Activated naive CD8-positive, alpha-beta T cell treated with anti-CD3 and anti-CD28 coated beads, Interleukin-2, amount 10 ng/mL, durations not matched to agents 7 days and 5 days (primary cell): ENCODE measurements at regions of chr12 and their contacts with region 1.

Region 1: DNA sequence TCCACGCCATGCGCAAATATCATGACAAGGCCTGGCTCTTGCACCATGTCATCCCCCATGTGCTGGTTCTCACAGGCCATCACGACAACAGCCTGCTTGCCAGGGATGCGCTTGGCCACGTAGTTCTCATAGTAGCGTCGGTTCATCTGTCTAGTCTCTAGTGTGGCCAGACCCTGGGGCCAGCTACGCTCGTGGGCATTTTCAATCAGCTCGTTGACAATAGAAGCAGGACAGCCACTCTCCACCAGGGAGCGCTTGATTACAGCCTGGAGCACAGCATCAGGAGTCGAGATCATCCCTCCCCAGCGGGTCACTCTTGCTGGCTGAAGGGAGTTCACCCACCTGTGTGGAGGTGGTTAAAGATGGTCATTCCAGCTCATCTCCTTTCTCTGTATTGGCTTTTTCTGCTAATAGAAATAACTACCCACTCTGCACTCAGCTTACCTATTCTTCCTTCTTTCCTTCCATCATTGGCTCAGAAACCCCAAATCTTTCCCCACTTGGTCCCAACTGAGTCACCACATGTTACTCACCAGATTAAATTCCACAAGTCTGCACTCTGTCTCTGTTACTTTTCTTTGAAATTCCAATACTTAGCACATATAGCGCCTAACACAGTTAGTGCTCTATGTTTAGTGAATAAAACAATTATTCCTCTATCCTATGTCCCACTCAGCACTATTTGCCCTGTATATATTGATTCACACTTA is 15.1 kb downstream of the RNF41 start:
- DNase-seq: no peak
- ATAC-seq: peak; percentile 67
- H3K4me3 Mint-ChIP-seq: no peak overlapping the region
- H3K27ac Mint-ChIP-seq: no peak overlapping the region
- H3K4me1 Mint-ChIP-seq: peaks cover 1% of the 10 kb centered on the region
- H3K27me3 Mint-ChIP-seq: no peaks in the 10 kb centered on the region

Region 2: GRCh38 chr12:55817346-55818139 is 389.1 kb before region 1 on chr12 and contains the starts of genes ORMDL2 and SARNP:
- POLR2A ChIA-PET with region 1: no interaction called
- DNase-seq: peak; percentile 88
- ATAC-seq: peak; percentile 96
- H3K4me3 Mint-ChIP-seq: no peak within 1 kb of the TSS
- H3K27ac Mint-ChIP-seq: no peak within 1 kb of the TSS
- H3K4me1 Mint-ChIP-seq: peaks cover 35% of the 10 kb centered on the region
- H3K27me3 Mint-ChIP-seq: no peaks in the 10 kb centered on the region
- total RNA-seq, gene ORMDL2: 43.4 to 45.4 TPM
- total RNA-seq, gene SARNP: 80.6 to 82.4 TPM

Region 3: DNA sequence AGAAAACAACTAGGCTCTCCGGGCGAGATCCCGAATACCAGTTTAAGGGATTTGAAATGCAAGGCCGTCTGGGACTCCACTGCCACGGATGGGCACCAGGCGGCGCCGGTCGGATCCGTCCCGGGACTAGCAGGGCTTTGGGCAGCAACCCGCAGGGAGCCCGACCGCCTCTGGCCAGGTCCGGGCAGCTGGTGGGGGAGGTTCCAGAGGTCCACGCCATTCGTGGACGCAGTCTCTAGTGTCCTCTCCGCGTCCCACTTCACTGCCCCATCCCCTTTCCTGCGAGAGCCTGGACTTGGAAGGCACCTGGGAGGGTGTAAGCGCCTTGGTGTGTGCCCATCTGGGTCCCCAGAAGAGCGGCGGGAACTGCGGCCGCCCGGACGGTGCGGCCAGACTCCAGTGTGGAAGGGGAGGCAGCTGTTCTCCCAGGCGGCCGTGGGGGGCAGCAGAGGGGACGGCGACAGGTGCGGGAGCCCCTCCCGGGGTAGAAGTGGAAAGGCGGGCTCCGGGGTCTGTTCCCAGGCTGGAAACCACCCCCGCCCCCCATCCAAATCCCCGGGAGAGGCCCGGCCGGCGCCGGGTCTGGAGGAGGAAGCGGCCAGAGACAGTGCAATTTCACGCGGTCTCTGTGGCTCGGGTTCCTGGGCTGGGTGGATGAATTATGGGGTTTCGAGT is 127.5 kb before region 1 on chr12:
- POLR2A ChIA-PET with region 1: no interaction called
- DNase-seq: peak; percentile 68
- ATAC-seq: peak; percentile 62
- H3K4me3 Mint-ChIP-seq: peak overlapping the region; percentile 82
- H3K27ac Mint-ChIP-seq: no peak overlapping the region
- H3K4me1 Mint-ChIP-seq: peaks cover 10% of the 10 kb centered on the region
- H3K27me3 Mint-ChIP-seq: peaks cover 26% of the 10 kb centered on the region

Region 4: GRCh38 chr12:56221527-56222387 is 15.1 kb after region 1 on chr12 and contains the start of gene RNF41:
- POLR2A ChIA-PET with region 1: interaction called, 14 read pairs
- DNase-seq: peak; percentile 92
- ATAC-seq: peak; percentile 83
- H3K4me3 Mint-ChIP-seq: peak within 1 kb of the TSS; percentile 96
- H3K27ac Mint-ChIP-seq: peak within 1 kb of the TSS; percentile 91
- H3K4me1 Mint-ChIP-seq: peaks cover 34% of the 10 kb centered on the region
- H3K27me3 Mint-ChIP-seq: no peaks in the 10 kb centered on the region
- total RNA-seq, gene RNF41: 36.1 to 38.1 TPM